ENCODE measurements at regions of chr6 and their contacts with region 1.

Region 1: DNA sequence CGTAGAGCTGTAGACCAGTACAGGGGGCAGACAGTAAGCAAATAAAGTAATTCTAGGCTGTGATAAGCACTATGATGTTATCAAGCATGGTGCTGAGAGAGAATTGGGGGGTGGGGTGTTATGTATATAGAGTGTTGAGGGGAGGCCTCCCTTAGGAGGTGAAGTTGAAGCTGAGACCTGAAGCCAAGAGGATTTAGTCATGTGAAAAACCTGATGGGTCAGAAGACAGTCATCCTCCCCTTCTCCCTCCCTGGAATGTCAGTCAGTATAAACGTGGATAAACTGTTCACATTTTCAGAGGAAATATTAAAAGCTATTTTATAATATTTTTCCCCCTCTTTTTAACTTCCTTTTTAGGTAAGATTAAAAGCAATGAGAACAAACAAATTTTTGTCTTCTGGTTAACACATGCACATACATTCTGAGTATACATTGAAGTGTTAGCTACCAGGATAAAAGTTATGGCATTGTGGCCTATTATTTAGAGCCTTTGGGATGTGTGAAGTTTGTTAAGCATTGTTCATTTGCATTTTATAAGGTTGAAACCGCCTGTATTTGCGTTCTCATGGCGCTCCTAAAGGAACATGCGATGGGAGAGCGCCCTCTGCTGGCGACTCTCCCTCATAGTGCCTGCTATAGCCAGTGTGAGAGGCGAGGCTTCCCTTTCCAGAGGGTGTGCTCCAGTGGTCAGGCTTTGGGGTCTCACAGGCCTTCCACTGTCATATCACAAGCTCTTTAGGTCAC is 35.4 kb upstream of the MAPK13 start:
- DNase-seq: peak; percentile 61 to 82 (median 77)
- ATAC-seq: peak; percentile 88
- H3K4me3 ChIP-seq: no peak overlapping the region
- H3K4me3 Mint-ChIP-seq: no peak overlapping the region
- H3K27ac ChIP-seq: peak overlapping the region; percentile 62
- H3K27ac Mint-ChIP-seq: peak overlapping the region in 8 of 9 donors; percentile 46 to 85 (median 78)
- H3K4me1 ChIP-seq: peaks cover 15 to 21% of the 10 kb centered on the region in 2 donors
- H3K4me1 Mint-ChIP-seq: peaks cover 14 to 48% (median 40%) of the 10 kb centered on the region in 7 donors
- H3K27me3 ChIP-seq: no peaks in the 10 kb centered on the region
- H3K27me3 Mint-ChIP-seq: no peaks in the 10 kb centered on the region

Region 2: DNA sequence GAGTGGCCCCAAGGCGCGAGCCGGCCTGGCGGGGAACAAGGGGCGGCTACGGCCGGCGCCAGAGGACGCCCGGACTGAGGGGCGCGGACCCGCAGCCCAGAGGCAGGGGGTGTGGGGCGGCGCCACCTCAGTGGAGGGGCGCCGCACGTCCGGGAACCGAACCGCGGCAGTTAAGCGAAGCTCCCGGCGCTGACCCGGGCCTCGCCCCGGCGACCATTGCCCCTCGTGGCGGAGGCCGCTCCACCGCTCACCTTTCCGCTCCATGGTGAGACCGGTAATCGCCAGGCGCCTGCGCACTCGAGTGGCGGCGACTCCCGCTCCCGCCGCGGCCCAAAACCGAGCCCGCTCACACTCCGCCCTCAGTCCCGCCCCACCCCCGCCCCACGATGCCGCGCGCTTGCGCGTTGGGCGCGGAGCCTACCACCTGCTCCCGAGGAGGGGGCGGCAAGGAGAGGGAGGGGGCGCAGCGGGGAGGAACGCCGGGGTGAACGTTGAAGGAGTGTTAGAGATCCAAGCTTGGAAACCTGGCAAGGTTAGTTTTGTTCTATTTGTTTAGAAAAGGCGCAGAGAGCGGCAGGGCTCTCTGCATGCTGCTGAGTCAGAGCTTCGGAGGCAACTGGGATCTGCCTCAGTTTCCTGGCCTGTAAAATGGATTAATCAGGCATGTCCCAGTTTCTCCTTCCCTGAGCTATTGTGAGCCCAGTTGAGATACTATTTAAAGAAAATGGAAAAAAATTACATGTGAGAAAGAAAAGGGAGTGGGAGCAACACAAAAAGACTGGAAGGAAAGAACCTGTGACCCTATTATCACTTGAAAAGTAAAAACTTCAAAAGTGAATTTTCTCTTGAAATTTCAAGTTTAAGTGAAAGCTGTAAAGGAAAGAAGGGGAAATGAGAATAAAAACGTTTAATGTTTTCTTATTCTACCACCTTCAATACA is 173.9 kb before region 1 on chr6 and contains the start of gene SRPK1:
- CTCF ChIA-PET with region 1: no interaction called
- POLR2A ChIA-PET with region 1: no interaction called
- intact Hi-C with region 1: loop called in 1 of 2 experiments (anchors 10 kb)
- DNase-seq: peak; percentile 58 to 92 (median 73)
- ATAC-seq: peak; percentile 87
- H3K4me3 ChIP-seq: peak within 1 kb of the TSS; percentile 98
- H3K4me3 Mint-ChIP-seq: peak within 1 kb of the TSS; percentile 87 to 100 (median 94)
- H3K27ac ChIP-seq: peak within 1 kb of the TSS; percentile 76
- H3K27ac Mint-ChIP-seq: peak within 1 kb of the TSS; percentile 81 to 98 (median 94)
- H3K4me1 ChIP-seq: peaks cover 12 to 28% of the 10 kb centered on the region in 2 donors
- H3K4me1 Mint-ChIP-seq: peaks cover 18 to 49% (median 41%) of the 10 kb centered on the region in 7 donors
- H3K27me3 ChIP-seq: no peaks in the 10 kb centered on the region
- H3K27me3 Mint-ChIP-seq: no peaks in the 10 kb centered on the region
- total RNA-seq, gene SRPK1: 29.1 to 80.9 (median 42.1) TPM

Region 3: GRCh38 chr6:35973670-35974222 is 121.2 kb before region 1 on chr6:
- CTCF ChIA-PET with region 1: no interaction called
- POLR2A ChIA-PET with region 1: no interaction called
- intact Hi-C with region 1: no loop called
- DNase-seq: no peak
- ATAC-seq: no peak
- H3K4me3 ChIP-seq: no peak overlapping the region
- H3K4me3 Mint-ChIP-seq: no peak overlapping the region
- H3K27ac ChIP-seq: no peak overlapping the region
- H3K27ac Mint-ChIP-seq: no peak overlapping the region
- H3K4me1 ChIP-seq: no peaks in the 10 kb centered on the region
- H3K4me1 Mint-ChIP-seq: peaks cover 0 to 4% (median 0%) of the 10 kb centered on the region in 7 donors
- H3K27me3 ChIP-seq: no peaks in the 10 kb centered on the region
- H3K27me3 Mint-ChIP-seq: no peaks in the 10 kb centered on the region

Region 4: GRCh38 chr6:36083446-36083845 is 11.5 kb before region 1 on chr6:
- CTCF ChIA-PET with region 1: interaction called, 47 read pairs
- POLR2A ChIA-PET with region 1: no interaction called
- intact Hi-C with region 1: loop called in 1 of 2 experiments (anchors 2 kb)
- DNase-seq: no peak
- ATAC-seq: no peak
- H3K4me3 ChIP-seq: no peak overlapping the region
- H3K4me3 Mint-ChIP-seq: no peak overlapping the region
- H3K27ac ChIP-seq: no peak overlapping the region
- H3K27ac Mint-ChIP-seq: no peak overlapping the region
- H3K4me1 ChIP-seq: no peaks in the 10 kb centered on the region
- H3K4me1 Mint-ChIP-seq: peaks cover 0 to 34% (median 13%) of the 10 kb centered on the region in 7 donors
- H3K27me3 ChIP-seq: no peaks in the 10 kb centered on the region
- H3K27me3 Mint-ChIP-seq: no peaks in the 10 kb centered on the region

Region 5: GRCh38 chr6:36131511-36132245 is 36.8 kb after region 1 on chr6:
- CTCF ChIA-PET with region 1: interaction called, 26 read pairs
- POLR2A ChIA-PET with region 1: interaction called, 11 read pairs
- intact Hi-C with region 1: loop called in 1 of 2 experiments (anchors 1 kb)
- DNase-seq: peak in 7 of 9 donors; percentile 41 to 58 (median 48)
- ATAC-seq: peak; percentile 67
- H3K4me3 ChIP-seq: peak overlapping the region; percentile 72
- H3K4me3 Mint-ChIP-seq: peak overlapping the region; percentile 85 to 92 (median 88)
- H3K27ac ChIP-seq: peak overlapping the region; percentile 87
- H3K27ac Mint-ChIP-seq: peak overlapping the region; percentile 84 to 96 (median 92)
- H3K4me1 ChIP-seq: peaks cover 24 to 25% of the 10 kb centered on the region in 2 donors
- H3K4me1 Mint-ChIP-seq: peaks cover 37 to 55% (median 49%) of the 10 kb centered on the region in 7 donors
- H3K27me3 ChIP-seq: no peaks in the 10 kb centered on the region
- H3K27me3 Mint-ChIP-seq: no peaks in the 10 kb centered on the region

Region 6: GRCh38 chr6:36302227-36302976 is 207.5 kb after region 1 on chr6:
- CTCF ChIA-PET with region 1: no interaction called
- POLR2A ChIA-PET with region 1: no interaction called
- intact Hi-C with region 1: loop called in 1 of 2 experiments (anchors 2 kb)
- DNase-seq: peak; percentile 74 to 92 (median 88)
- ATAC-seq: peak; percentile 100
- H3K4me3 ChIP-seq: no peak overlapping the region
- H3K4me3 Mint-ChIP-seq: no peak overlapping the region
- H3K27ac ChIP-seq: no peak overlapping the region
- H3K27ac Mint-ChIP-seq: peak overlapping the region in 4 of 9 donors; percentile 29 to 59 (median 48)
- H3K4me1 ChIP-seq: no peaks in the 10 kb centered on the region
- H3K4me1 Mint-ChIP-seq: peaks cover 0 to 8% (median 6%) of the 10 kb centered on the region in 7 donors
- H3K27me3 ChIP-seq: no peaks in the 10 kb centered on the region
- H3K27me3 Mint-ChIP-seq: peaks cover 0 to 29% (median 5%) of the 10 kb centered on the region in 5 donors

Measured in naive thymus-derived CD4-positive, alpha-beta T cell (primary cell).